ENCODE measurements at regions of chr17 and their contacts with region 1.

Region 1: DNA sequence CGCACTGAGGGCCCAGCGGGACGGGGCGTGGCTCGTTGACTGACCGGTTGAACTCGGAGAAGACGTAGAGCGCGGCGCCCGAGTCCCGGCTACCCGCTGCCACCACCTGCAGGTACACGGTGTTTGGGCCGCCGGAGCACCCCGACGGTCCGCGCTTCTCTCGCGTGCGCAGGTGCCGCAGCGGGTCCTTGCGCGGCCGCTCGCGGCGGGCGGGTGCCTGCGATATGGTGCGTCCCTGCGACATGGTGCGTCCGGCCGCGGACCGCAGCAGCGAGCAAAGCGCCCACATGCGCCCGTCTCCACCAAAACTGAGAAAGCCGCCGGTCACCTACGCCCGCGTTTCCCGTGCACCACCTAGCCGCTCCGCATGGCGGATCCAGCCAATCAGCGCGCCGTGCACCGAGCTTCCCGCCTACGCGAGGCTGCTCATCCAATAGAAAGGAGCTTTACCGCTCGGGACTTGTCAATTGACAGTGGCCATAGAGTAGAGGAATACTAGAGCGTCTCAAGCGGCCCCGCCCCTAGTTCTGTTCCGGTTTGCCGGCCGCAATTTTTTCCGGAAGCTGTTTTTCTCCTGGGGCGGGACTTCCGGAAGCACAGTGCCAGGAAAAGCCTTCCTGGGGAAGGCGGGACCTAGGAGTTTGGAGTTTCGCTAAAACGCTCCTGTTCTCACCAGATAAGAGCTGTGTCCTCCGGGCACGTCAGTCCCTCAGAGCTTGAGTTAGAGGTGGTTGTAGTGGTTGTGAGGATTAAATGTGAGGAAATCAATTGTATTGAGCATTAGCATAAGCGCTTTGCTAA is at the start of gene ELAC2:
- DNase-seq: peak; percentile 96 to 97
- H3K4me3 ChIP-seq: peak within 1 kb of the TSS; percentile 69
- H3K4me1 ChIP-seq: peaks cover 5% of the 10 kb centered on the region
- H3K27me3 ChIP-seq: no peaks in the 10 kb centered on the region

Region 2: DNA sequence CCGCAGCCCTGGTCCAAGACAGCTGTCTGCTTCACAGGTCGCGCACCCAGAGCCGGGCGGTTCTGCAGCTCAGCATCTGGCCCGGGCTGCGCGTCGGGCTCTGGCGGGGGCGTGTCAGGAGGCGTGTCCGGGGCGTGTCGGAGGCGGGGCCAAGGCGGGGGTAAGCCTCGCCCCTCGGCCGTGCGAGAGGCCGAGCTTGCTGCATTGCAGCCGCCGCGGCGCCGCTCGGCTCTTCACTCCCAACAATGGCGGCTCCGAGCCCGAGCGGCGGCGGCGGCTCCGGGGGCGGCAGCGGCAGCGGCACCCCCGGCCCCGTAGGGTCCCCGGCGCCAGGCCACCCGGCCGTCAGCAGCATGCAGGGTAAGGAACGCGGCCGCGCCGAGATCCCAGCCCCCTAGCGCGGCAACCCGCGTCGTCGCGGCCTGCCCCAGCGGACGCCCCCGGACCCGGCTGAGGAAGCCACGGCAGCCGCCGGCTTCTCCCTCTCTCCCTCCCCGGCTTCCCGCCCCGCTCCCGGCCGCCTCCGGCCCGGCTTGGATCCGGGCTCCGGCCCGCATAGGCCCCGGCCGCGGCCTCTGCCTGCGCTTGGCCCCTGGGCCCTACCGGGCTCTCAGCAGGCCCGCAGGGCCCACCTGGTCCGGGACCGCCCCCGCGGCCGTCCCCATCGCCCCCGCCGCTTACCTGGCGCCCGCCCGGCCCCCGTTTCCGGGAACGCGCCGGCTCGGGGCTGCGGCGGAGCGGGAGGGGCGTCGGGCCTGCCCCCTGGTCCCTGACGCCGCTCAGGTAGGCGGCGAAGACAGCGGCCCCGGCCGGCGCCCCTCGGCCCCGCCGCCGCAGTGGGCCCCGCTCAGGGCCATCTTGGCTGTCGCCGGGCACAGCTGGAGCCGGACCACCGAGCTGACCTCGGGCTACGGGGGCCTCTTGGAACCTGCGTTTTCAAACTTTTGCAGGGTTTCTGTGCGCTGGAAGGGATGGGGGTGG is 996.9 kb before region 1 on chr17 and contains the start of gene MAP2K4:
- in situ Hi-C with region 1: loop called (anchors 25 kb)
- DNase-seq: peak; percentile 79 to 92
- H3K4me3 ChIP-seq: peak within 1 kb of the TSS; percentile 39
- H3K4me1 ChIP-seq: peaks cover 22% of the 10 kb centered on the region
- H3K27me3 ChIP-seq: no peaks in the 10 kb centered on the region

Region 3: GRCh38 chr17:12730931-12731521 is 286.8 kb before region 1 on chr17:
- in situ Hi-C with region 1: no loop called
- DNase-seq: no peak
- H3K4me3 ChIP-seq: no peak overlapping the region
- H3K4me1 ChIP-seq: no peaks in the 10 kb centered on the region
- H3K27me3 ChIP-seq: no peaks in the 10 kb centered on the region

Region 4: DNA sequence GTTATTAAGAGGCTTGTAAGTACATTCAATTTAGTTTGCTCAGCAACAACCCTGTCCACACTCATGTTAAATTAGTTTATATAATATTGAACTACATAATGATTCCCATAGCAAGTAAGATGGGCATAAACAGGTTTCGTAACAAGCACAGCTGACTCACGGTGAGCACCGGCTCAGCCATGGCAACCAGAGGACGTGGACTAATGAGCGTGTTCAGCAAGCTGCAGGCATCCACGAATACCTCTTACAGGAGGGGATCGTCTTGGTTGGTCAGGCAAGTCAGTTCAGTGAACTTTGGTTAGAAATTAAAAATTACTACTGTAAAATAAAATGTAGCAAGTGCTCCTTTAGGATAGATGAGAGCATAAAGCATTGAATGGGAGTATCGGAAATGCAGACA is 58.4 kb before region 1 on chr17:
- in situ Hi-C with region 1: no loop called
- DNase-seq: no peak
- H3K4me3 ChIP-seq: no peak overlapping the region
- H3K4me1 ChIP-seq: no peaks in the 10 kb centered on the region
- H3K27me3 ChIP-seq: no peaks in the 10 kb centered on the region

Region 5: GRCh38 chr17:14069251-14070021 is 1051.6 kb after region 1 on chr17 and contains the start of gene COX10:
- in situ Hi-C with region 1: loop called (anchors 25 kb)
- DNase-seq: peak; percentile 80 to 94
- H3K4me3 ChIP-seq: peak within 1 kb of the TSS; percentile 98
- H3K4me1 ChIP-seq: peaks cover 8% of the 10 kb centered on the region
- H3K27me3 ChIP-seq: no peaks in the 10 kb centered on the region

Measured in HAP-1 (cell line).